Heart right ventricle (tissue), 16 donors: ENCODE measurements at regions of chr7 and their contacts with region 1.

Region 1: GRCh38 chr7:101138213-101138870 is 11.4 kb downstream of the SERPINE1 start:
- DNase-seq: peak; percentile 69 to 82
- ATAC-seq: peak; percentile 84 to 94 (median 92)
- H3K4me3 ChIP-seq: peak overlapping the region in 3 of 10 donors; percentile 15 to 33 (median 26)
- H3K27ac ChIP-seq: peak overlapping the region in 7 of 10 donors; percentile 22 to 84 (median 52)
- H3K4me1 ChIP-seq: peaks cover 7 to 42% (median 13%) of the 10 kb centered on the region in 9 donors
- H3K27me3 ChIP-seq: peaks cover 0 to 9% (median 0%) of the 10 kb centered on the region in 7 donors
- CTCF ChIP-seq: peak; percentile 69 to 90 (median 84)

Region 2: DNA sequence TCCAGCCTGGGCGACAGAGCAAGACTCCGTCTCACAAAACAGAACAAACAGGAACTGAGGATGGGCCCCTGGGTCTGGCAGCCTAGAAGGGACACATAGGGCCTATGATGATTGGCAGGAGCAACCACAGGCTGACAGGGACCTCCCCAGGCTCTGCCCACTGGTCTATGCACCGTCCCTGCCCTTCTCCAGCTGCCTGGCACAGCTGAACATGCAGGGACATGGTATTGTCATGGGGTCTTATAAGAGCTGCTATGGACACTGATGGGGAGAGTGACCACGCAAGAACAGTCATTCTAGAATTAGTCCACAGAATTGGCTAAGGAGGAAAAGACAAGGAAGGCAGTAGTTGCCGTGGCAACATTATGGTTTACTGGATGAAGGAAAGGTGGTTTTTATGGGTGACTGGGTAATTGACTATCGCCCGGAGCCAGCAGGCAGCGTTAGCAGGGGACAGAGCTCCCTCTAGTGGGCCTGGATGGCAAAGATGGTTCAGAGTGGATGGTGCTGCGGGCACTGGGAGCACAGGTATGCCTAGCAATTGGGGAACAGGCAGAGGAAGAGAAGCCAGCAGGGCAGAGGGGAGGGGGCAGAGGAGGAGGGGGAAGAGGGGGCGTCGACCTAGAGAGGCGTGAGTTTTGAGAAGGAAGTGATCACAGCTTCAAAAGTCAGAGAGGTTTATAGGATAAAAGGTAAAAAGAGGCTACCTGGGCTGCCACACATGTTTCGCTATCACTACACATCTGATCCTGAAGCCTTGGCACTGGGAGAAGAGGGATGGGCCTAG is 60.8 kb before region 1 on chr7:
- intact Hi-C with region 1: loop called in 1 of 10 experiments (anchors 5 kb)
- DNase-seq: peak; percentile 66 to 70
- ATAC-seq: peak; percentile 75 to 90 (median 86)
- H3K4me3 ChIP-seq: no peak overlapping the region
- H3K27ac ChIP-seq: no peak overlapping the region
- H3K4me1 ChIP-seq: peaks cover 0 to 5% (median 0%) of the 10 kb centered on the region in 9 donors
- H3K27me3 ChIP-seq: peaks cover 0 to 2% (median 0%) of the 10 kb centered on the region in 7 donors
- CTCF ChIP-seq: peak; percentile 73 to 86 (median 83)

Region 3: DNA sequence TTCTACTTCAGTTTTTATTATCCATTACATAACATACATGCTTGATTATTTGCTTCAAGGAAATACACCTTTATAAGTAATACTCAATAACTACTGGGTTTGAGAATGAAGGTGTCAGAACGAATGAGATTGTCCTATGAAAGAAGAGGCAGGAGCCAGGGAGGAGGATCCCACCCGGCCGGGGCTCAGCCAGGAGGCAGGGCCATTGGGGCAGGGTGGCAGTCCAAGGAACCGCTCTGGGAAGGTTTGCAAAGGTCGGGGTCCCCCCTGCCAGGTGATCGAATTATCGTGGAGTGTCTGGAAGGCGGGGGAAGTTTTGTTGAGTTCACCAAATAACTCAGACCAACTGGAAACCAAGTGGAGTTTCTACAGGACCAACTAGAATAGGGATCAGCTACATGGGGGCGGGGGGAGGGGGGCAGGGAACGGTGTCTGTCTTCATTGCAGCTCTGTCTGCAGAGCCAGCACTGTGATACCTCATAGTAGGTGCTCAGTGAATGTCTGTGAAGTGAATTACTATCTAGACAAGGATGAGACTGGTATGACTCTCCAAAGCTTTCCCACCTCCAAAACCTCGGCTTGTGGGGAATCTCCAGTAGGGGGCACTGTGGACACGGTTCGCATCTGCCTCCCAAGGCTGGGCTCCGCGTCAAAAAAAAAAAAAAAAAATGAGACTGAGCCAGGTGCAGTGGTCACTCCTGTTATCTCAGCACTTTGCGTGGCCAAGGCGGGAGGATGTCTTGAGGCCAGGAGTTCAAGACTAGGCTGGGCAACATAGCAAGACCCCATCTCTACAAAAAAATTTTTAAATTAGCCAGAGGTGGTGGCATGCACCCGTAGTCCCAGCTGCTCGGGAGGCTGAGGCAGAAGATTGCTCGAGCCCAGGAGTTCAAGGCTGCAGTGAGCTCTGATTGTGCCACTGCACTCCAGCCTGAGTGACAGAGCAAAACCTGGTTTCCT is 43.6 kb before region 1 on chr7:
- intact Hi-C with region 1: loop called in 9 of 10 experiments (anchors 1 to 5 kb)
- DNase-seq: peak; percentile 42 to 45
- ATAC-seq: peak; percentile 35 to 71 (median 62)
- H3K4me3 ChIP-seq: no peak overlapping the region
- H3K27ac ChIP-seq: peak overlapping the region in 2 of 10 donors; percentile 16 to 21
- H3K4me1 ChIP-seq: peaks cover 0 to 30% (median 14%) of the 10 kb centered on the region in 9 donors
- H3K27me3 ChIP-seq: no peaks in the 10 kb centered on the region
- CTCF ChIP-seq: peak; percentile 50 to 80 (median 70)

Region 4: GRCh38 chr7:101185258-101185839 is 47.0 kb after region 1 on chr7:
- intact Hi-C with region 1: loop called in 4 of 10 experiments (anchors 5 kb)
- DNase-seq: no peak
- ATAC-seq: no peak
- H3K4me3 ChIP-seq: no peak overlapping the region
- H3K27ac ChIP-seq: no peak overlapping the region
- H3K4me1 ChIP-seq: no peaks in the 10 kb centered on the region
- H3K27me3 ChIP-seq: peaks cover 5 to 81% (median 50%) of the 10 kb centered on the region in 7 donors
- CTCF ChIP-seq: no peak